H1 (cell line): ENCODE measurements at regions of chr3 and their contacts with region 1.

Region 1: GRCh38 chr3:111978493-111979433 is at the start of gene ABHD10:
- DNase-seq: peak; percentile 93 to 95
- H3K4me3 ChIP-seq: peak within 1 kb of the TSS; percentile 80 to 91 (median 84)
- H3K27ac ChIP-seq: peak within 1 kb of the TSS; percentile 72
- H3K4me1 ChIP-seq: no peaks in the 10 kb centered on the region
- H3K27me3 ChIP-seq: no peaks in the 10 kb centered on the region
- CTCF ChIP-seq: no peak
- EP300 ChIP-seq: no peak
- POLR2A ChIP-seq: peak; percentile 86 to 93
- RAD21 ChIP-seq: no peak
- total RNA-seq, gene ABHD10: 24.6 and 27.5 TPM in 2 replicates

Region 2: GRCh38 chr3:111819912-111820311 is 158.9 kb before region 1 on chr3:
- CTCF ChIA-PET with region 1: no interaction called
- POLR2A ChIA-PET with region 1: no interaction called
- DNase-seq: no peak
- H3K4me3 ChIP-seq: no peak overlapping the region
- H3K27ac ChIP-seq: no peak overlapping the region
- H3K4me1 ChIP-seq: no peaks in the 10 kb centered on the region
- H3K27me3 ChIP-seq: no peaks in the 10 kb centered on the region
- CTCF ChIP-seq: no peak
- EP300 ChIP-seq: no peak
- POLR2A ChIP-seq: no peak
- RAD21 ChIP-seq: no peak

Region 3: DNA sequence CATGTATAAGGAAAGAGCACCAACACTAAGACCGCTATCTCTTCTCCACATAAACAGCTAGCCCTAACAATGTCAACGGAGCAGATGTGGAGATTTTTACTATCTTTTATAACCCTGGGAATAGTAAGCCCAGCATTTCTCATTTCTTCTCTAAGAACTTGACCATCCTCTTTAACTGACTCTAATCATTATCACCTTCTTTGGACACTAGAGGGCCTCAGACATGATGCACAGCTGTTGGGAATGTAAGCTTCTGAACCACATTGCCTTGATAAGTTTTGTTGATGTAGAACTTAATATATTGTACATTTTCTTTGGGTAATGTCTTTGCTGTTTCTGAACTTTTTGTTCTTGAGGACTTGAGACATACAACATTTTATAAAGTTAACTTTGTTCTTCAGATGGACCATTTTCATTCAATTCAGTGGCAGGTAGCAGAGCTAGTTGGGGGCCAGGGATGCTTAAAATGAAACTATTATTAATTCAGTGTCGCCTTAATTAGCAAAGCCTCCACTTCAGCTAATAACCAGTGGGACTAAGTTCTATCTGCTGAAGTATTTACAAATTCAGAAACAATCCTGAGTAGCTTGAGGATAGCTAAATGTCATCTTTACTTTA is 10.4 kb after region 1 on chr3:
- CTCF ChIA-PET with region 1: interaction called, 18 read pairs
- POLR2A ChIA-PET with region 1: interaction called, 7 read pairs
- DNase-seq: no peak
- H3K4me3 ChIP-seq: no peak overlapping the region
- H3K27ac ChIP-seq: no peak overlapping the region
- H3K4me1 ChIP-seq: no peaks in the 10 kb centered on the region
- H3K27me3 ChIP-seq: no peaks in the 10 kb centered on the region
- CTCF ChIP-seq: peak in 2 of 3 experiments; percentile 64 to 75; a peak in 3 of 4 replicates
- EP300 ChIP-seq: no peak
- POLR2A ChIP-seq: no peak
- RAD21 ChIP-seq: peak; percentile 61 to 64

Region 4: GRCh38 chr3:111998636-111999483 is 20.1 kb after region 1 on chr3 and contains the start of gene TAGLN3:
- CTCF ChIA-PET with region 1: interaction called, 6 read pairs
- POLR2A ChIA-PET with region 1: interaction called, 16 read pairs
- DNase-seq: peak in 1 of 2 experiments; percentile 77
- H3K4me3 ChIP-seq: peak within 1 kb of the TSS; percentile 63 to 77 (median 72)
- H3K27ac ChIP-seq: 0 out of 2 replicates have a peak within 1 kb of the TSS, but pooled peaks have one; percentile 5
- H3K4me1 ChIP-seq: peaks cover 3 to 10% (median 6%) of the 10 kb centered on the region in 4 experiments; a peak in 5 of 7 replicates
- H3K27me3 ChIP-seq: peaks cover 0 to 22% (median 9%) of the 10 kb centered on the region in 4 experiments; a peak in 3 of 7 replicates
- CTCF ChIP-seq: no peak
- EP300 ChIP-seq: no peak
- POLR2A ChIP-seq: peak in 1 of 2 experiments; percentile 31; a peak in 2 of 3 replicates
- RAD21 ChIP-seq: no peak
- total RNA-seq, gene TAGLN3: 7.2 and 7.5 TPM in 2 replicates